CD4-positive, alpha-beta memory T cell (primary cell): ENCODE measurements at regions of chr4 and their contacts with region 1.

Region 1: GRCh38 chr4:159102622-159103383 is at the start of gene RAPGEF2:
- DNase-seq: peak; percentile 88 to 91 (median 90)
- H3K4me3 ChIP-seq: peak within 1 kb of the TSS; percentile 32 to 66
- H3K4me3 Mint-ChIP-seq: peak within 1 kb of the TSS; percentile 86 to 92 (median 90)
- H3K27ac ChIP-seq: peak within 1 kb of the TSS; percentile 65
- H3K27ac Mint-ChIP-seq: peak within 1 kb of the TSS; percentile 89 to 97 (median 94)
- H3K4me1 ChIP-seq: peaks cover 40% of the 10 kb centered on the region
- H3K4me1 Mint-ChIP-seq: peaks cover 31 to 48% (median 40%) of the 10 kb centered on the region in 4 donors
- H3K27me3 ChIP-seq: no peaks in the 10 kb centered on the region
- H3K27me3 Mint-ChIP-seq: no peaks in the 10 kb centered on the region
- total RNA-seq, gene RAPGEF2: 23.1 to 27.9 TPM

Region 2: DNA sequence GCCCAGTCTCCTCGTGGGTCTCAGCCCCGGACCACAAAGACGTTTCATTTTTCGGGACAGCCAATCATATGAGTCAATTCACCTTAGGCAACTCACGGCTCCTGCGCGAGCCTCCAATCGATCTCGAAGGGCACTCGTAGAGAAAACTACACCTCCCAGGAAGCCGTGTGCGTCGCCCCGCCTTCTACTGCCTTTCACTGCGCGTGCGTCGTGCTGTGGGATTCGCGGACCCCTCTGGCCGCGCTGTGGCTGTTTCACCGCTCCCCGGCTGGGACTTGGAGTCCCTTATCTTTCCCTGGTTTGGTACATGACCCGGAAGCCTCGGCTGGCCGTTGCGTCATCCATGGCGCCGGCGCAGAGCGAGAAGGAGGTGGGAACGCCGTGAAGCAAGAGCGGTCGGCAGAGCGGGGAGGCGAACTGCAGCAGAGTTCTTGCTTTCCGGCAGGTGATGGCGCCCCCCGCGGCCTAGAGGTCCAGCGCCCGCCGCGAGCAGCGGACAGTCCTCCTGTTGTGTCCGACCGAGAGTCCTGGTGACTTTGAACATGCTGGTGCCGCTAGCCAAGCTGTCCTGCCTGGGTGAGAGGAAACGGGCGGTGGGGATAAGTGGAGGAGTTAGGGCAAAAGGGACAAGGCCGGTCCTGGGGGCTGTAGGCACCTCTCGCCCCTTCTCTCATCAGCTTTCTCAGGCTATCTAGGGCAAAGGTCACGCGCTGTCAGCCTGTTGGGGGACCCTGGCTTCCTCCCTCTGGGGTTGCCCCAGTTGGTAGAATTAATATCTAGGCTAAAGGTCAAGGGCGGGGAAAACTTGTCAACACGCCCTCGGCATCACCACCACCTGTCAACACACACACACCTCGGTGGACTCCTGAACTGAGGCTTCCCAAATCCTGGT is 430.6 kb before region 1 on chr4 and contains the start of gene ETFDH:
- CTCF ChIA-PET with region 1: no interaction called
- POLR2A ChIA-PET with region 1: no interaction called
- intact Hi-C with region 1: loop called (anchors 1 kb)
- DNase-seq: peak; percentile 97 to 99 (median 99)
- H3K4me3 ChIP-seq: peak within 1 kb of the TSS; percentile 53 to 94
- H3K4me3 Mint-ChIP-seq: peak within 1 kb of the TSS; percentile 92 to 98 (median 96)
- H3K27ac ChIP-seq: peak within 1 kb of the TSS; percentile 92
- H3K27ac Mint-ChIP-seq: peak within 1 kb of the TSS; percentile 92 to 99 (median 98)
- H3K4me1 ChIP-seq: peaks cover 22% of the 10 kb centered on the region
- H3K4me1 Mint-ChIP-seq: peaks cover 12 to 34% (median 23%) of the 10 kb centered on the region in 4 donors
- H3K27me3 ChIP-seq: no peaks in the 10 kb centered on the region
- H3K27me3 Mint-ChIP-seq: no peaks in the 10 kb centered on the region
- total RNA-seq, gene ETFDH: 16.0 to 16.6 TPM

Region 3: GRCh38 chr4:158722917-158723793 is 379.6 kb before region 1 on chr4 and contains the start of gene PPID:
- CTCF ChIA-PET with region 1: no interaction called
- POLR2A ChIA-PET with region 1: no interaction called
- intact Hi-C with region 1: loop called (anchors 2 kb)
- DNase-seq: peak; percentile 77 to 88 (median 79)
- H3K4me3 ChIP-seq: peak within 1 kb of the TSS; percentile 63 to 89
- H3K4me3 Mint-ChIP-seq: peak within 1 kb of the TSS; percentile 95 to 100 (median 98)
- H3K27ac ChIP-seq: peak within 1 kb of the TSS; percentile 93
- H3K27ac Mint-ChIP-seq: peak within 1 kb of the TSS; percentile 95 to 100 (median 99)
- H3K4me1 ChIP-seq: peaks cover 24% of the 10 kb centered on the region
- H3K4me1 Mint-ChIP-seq: peaks cover 25 to 45% (median 35%) of the 10 kb centered on the region in 4 donors
- H3K27me3 ChIP-seq: no peaks in the 10 kb centered on the region
- H3K27me3 Mint-ChIP-seq: peaks cover 0 to 4% of the 10 kb centered on the region in 2 donors
- total RNA-seq, gene PPID: 30.2 to 32.0 TPM

Region 4: GRCh38 chr4:159077702-159078495 is 24.9 kb before region 1 on chr4:
- CTCF ChIA-PET with region 1: no interaction called
- POLR2A ChIA-PET with region 1: interaction called, 5 read pairs
- intact Hi-C with region 1: loop called (anchors 2 kb)
- DNase-seq: peak in 3 of 5 donors; percentile 12 to 29 (median 24)
- H3K4me3 ChIP-seq: no peak overlapping the region
- H3K4me3 Mint-ChIP-seq: peak overlapping the region; percentile 65 to 85 (median 77)
- H3K27ac ChIP-seq: no peak overlapping the region
- H3K27ac Mint-ChIP-seq: peak overlapping the region in 6 of 7 donors; percentile 16 to 75 (median 46)
- H3K4me1 ChIP-seq: peaks cover 15% of the 10 kb centered on the region
- H3K4me1 Mint-ChIP-seq: peaks cover 3 to 7% (median 6%) of the 10 kb centered on the region in 4 donors
- H3K27me3 ChIP-seq: no peaks in the 10 kb centered on the region
- H3K27me3 Mint-ChIP-seq: no peaks in the 10 kb centered on the region